Activated CD8-positive, alpha-beta T cell treated with anti-CD3 and anti-CD28 coated beads, Interleukin-2, amount 10 ng/mL, durations not matched to agents 7 days and 5 days (primary cell): ENCODE measurements at regions of chr15 and their contacts with region 1.

Region 1: DNA sequence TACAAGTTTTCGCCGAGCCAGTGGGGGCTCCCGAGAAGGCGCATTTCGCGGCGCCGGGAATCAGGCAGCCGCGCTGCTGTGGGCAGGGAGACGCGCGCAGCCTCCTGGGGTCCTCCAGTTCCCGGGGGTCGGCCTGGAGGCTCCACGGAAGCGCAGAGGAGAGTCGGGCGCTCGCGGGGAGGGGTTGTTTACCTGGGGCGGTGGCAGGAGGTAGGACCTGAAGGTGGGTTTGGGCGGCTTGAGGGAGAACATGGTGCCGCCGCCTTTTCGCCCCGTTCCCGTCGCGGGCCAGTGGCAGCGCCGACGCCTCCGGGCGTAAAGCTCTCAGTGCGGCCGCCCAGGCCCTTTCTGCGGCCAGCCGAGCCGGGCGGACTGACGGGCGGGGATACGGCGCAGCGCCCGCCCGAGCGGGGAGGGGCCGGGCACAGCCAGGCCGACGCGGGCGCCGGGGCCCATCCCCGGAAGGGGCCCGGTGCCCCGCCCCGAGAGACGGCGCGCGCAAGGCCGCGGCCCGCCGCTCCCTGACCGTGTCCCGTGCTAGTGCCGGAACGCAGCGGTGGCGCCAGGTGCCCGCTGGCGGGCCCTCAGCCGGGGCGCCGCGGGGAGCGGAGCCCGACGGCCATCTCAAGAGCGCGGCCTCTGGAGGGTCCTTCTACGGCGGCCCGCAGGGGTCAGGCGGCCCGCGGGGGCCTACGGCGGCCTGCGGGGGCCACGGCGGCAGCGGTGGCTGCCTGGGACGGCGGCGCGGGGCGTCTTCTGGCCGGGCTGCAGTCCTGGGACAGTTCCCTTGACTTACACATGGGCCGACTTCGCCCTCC is at the start of gene MTMR10:
- DNase-seq: peak; percentile 74
- ATAC-seq: peak; percentile 96
- H3K4me3 Mint-ChIP-seq: peak within 1 kb of the TSS; percentile 94
- H3K27ac Mint-ChIP-seq: peak within 1 kb of the TSS; percentile 91
- H3K4me1 Mint-ChIP-seq: peaks cover 24% of the 10 kb centered on the region
- H3K27me3 Mint-ChIP-seq: peaks cover 6% of the 10 kb centered on the region
- total RNA-seq, gene MTMR10: 21.9 to 22.3 TPM

Region 2: GRCh38 chr15:30816430-30816829 is 175.0 kb before region 1 on chr15:
- CTCF ChIA-PET with region 1: no interaction called
- POLR2A ChIA-PET with region 1: no interaction called
- DNase-seq: no peak
- ATAC-seq: no peak
- H3K4me3 Mint-ChIP-seq: no peak overlapping the region
- H3K27ac Mint-ChIP-seq: no peak overlapping the region
- H3K4me1 Mint-ChIP-seq: peaks cover 3% of the 10 kb centered on the region
- H3K27me3 Mint-ChIP-seq: peaks cover 2% of the 10 kb centered on the region

Region 3: GRCh38 chr15:31013538-31014228 is 22.2 kb after region 1 on chr15:
- CTCF ChIA-PET with region 1: interaction called, 8 read pairs
- POLR2A ChIA-PET with region 1: interaction called, 10 read pairs
- DNase-seq: peak; percentile 41
- ATAC-seq: peak; percentile 89
- H3K4me3 Mint-ChIP-seq: no peak overlapping the region
- H3K27ac Mint-ChIP-seq: peak overlapping the region; percentile 77
- H3K4me1 Mint-ChIP-seq: peaks cover 27% of the 10 kb centered on the region
- H3K27me3 Mint-ChIP-seq: peaks cover 2% of the 10 kb centered on the region

Region 4: DNA sequence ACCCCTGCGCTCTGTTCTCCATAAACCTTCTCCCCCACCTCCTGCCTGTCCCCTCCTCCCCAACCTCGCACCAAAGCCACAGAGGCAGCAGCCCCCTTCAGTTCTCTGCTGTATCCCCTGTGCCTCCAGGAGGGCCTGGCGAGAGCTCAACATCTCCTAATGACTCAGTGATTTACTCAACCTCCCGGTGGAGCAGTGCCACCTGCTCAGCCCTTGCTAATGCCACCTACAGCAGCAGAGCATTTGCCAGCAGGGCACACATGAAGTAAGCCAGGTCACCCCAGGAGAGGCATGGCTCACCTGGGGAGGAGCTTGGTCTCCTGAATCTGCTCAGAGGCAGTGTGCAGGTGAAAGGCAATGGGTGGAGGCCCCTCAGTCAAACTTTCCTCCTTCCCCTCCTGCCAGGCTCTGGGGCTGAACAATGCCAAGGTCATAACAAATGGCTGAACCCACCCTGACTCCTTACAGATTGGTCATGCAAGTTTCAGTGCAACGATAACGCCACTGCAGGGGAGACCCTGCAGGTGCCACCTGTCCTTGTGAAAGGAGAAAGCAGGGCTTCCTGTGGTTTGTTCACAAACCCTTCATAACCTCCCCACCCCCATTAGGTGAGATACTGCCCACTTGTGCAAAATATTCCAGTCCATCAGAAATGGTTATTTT is 90.3 kb after region 1 on chr15:
- CTCF ChIA-PET with region 1: no interaction called
- POLR2A ChIA-PET with region 1: no interaction called
- DNase-seq: no peak
- ATAC-seq: no peak
- H3K4me3 Mint-ChIP-seq: no peak overlapping the region
- H3K27ac Mint-ChIP-seq: no peak overlapping the region
- H3K4me1 Mint-ChIP-seq: peaks cover 17% of the 10 kb centered on the region
- H3K27me3 Mint-ChIP-seq: peaks cover 20% of the 10 kb centered on the region

Region 5: GRCh38 chr15:31179693-31180092 is 188.2 kb after region 1 on chr15:
- CTCF ChIA-PET with region 1: no interaction called
- POLR2A ChIA-PET with region 1: no interaction called
- DNase-seq: no peak
- ATAC-seq: no peak
- H3K4me3 Mint-ChIP-seq: no peak overlapping the region
- H3K27ac Mint-ChIP-seq: no peak overlapping the region
- H3K4me1 Mint-ChIP-seq: peaks cover 8% of the 10 kb centered on the region
- H3K27me3 Mint-ChIP-seq: peaks cover 4% of the 10 kb centered on the region